ENCODE measurements at regions of chr12 and their contacts with region 1.

Region 1: DNA sequence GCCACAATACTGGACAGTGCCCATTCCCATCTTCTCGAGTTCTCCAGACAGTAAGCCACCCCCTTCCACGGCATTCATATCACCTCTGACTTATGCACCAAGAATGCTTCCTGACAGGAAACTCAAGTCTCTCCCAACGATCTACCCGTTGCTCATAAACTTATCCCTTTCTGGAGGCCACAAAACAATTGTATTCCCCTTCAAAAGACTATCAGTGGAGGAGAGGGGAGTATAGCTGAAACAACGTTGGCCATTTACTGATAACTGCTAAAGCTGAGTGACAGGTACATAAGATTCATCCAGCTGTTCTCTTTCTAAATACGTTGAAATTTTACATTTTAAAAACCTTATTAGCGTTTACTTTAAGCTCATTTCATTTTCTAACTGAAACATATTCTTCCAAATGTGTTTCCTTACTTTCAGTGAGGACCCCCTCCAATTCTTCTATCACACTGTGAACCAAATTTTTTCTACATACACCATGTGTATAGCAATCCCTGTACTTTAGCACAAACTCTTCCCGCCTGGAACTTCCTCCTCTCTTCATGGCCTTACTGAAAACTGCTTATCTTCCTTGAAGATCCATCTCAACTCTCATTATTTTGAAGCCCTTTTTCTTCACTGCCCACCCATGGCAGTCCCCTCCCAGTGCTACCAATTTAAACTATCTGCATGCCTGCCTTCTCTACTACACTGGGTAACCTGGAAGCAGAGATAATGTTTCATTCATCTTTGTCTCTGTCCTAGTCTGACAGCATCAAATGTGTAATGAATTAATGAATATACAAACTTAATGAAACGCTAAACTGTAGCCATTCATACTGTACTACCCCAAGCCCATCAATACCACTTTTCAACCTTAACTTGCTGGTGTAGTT is 28.8 kb downstream of the ATXN2 start:
- DNase-seq: peak; percentile 73
- H3K4me3 ChIP-seq: no peak overlapping the region
- H3K27ac ChIP-seq: peak overlapping the region; percentile 42
- H3K4me1 ChIP-seq: peaks cover 24% of the 10 kb centered on the region
- H3K27me3 ChIP-seq: no peaks in the 10 kb centered on the region
- CTCF ChIP-seq: no peak

Region 2: GRCh38 chr12:111599459-111600204 is 29.3 kb after region 1 on chr12:
- CTCF ChIA-PET with region 1: no interaction called
- dilution Hi-C with region 1: no loop called
- in situ Hi-C with region 1: no loop called
- intact Hi-C with region 1: loop called (anchors 2 kb)
- DNase-seq: peak; percentile 81
- H3K4me3 ChIP-seq: peak overlapping the region; percentile 61 to 99 (median 93)
- H3K27ac ChIP-seq: peak overlapping the region; percentile 53
- H3K4me1 ChIP-seq: peaks cover 9% of the 10 kb centered on the region
- H3K27me3 ChIP-seq: no peaks in the 10 kb centered on the region
- CTCF ChIP-seq: no peak

Measured in mammary epithelial cell (primary cell).